Activated CD4-positive, alpha-beta memory T cell treated with anti-CD3 and anti-CD28 coated beads for 36 hours (primary cell): ENCODE measurements at regions of chr7 and their contacts with region 1.

Region 1: DNA sequence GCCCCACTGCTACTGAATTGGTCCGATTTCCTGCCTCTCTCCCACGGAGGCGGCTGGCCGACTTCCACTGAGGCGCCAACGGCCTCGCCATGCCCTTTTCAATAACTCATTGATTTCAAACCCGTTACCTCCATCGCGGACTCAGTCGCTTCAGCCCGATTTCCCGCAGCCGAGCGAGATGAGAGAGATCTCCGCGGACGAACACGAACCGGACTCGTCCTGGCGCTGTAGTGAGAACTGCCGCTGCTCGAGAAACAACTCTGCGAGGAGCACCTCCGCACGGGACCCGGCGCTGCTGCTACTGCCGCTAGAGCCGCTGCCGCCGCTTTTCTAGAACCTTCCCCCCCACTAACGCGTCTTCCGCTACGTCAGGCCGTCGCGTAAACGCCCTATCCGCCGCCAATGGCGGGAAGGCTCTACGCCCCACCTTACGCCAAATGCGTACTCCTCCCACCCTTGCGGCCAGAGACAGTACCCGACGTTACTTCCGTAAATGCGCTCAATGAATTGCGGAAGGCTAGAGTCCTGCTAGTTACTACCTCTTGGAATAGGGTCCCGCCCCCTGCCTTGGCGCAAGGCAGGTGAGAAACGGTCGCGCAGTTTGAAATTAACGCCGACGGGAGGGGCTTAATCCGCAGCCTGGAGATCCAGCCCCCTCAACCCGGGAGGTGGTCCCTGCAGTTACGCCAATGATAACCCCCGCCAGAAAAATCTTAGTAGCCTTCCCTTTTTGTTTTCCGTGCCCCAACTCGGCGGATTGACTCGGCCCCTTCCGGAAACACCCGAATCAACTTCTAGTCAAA is at the start of gene HNRNPA2B1:
- DNase-seq: peak; percentile 98
- H3K4me3 Mint-ChIP-seq: peak within 1 kb of the TSS; percentile 99
- H3K27ac Mint-ChIP-seq: peak within 1 kb of the TSS; percentile 100
- H3K4me1 Mint-ChIP-seq: peaks cover 39% of the 10 kb centered on the region
- H3K27me3 Mint-ChIP-seq: peaks cover 6% of the 10 kb centered on the region
- total RNA-seq, gene HNRNPA2B1: 906 to 929 TPM

Region 2: DNA sequence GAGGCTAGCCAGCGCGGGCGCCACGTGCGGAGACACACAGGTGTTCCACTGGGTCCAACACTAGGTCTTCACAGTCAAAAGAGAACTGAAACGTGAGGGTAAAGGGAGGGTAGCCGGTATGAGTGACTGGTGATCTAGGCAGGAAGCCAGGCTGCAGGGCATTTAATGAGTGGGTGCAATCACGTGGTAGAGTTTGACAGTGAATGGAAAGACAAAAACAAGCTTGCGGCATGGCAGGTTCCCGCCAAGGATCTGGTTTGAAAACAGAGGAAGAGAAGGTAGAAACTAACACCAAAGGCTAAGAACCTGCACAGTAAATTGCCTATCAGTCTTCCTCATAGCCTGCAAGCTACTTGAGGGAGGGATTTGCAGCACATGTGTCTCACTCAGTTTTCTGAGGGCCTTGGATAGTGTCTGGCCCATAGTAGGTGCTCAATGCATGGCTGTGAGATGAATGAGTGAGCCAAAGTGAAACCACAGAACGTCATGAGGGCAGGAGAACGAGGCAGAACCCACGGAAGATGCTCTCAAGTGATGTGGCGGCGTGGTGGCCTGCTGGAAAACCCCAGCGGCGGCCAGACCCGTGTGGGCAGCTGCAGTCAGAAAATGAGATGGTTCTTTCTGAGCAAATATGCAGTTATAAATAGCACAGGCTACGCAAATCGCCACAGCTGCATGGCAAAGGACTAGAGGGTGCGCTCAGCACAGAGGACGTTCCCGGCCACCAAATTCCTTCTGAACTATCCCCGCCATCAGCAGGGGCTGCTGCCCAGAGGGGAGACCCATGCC is 232.2 kb before region 1 on chr7:
- CTCF ChIA-PET with region 1: interaction called, 3 read pairs
- POLR2A ChIA-PET with region 1: interaction called, 5 read pairs
- intact Hi-C with region 1: loop called (anchors 2 kb)
- DNase-seq: peak; percentile 87
- H3K4me3 Mint-ChIP-seq: peak overlapping the region; percentile 7
- H3K27ac Mint-ChIP-seq: peak overlapping the region; percentile 55
- H3K4me1 Mint-ChIP-seq: peaks cover 23% of the 10 kb centered on the region
- H3K27me3 Mint-ChIP-seq: peaks cover 31% of the 10 kb centered on the region

Region 3: GRCh38 chr7:26187380-26188205 is 13.1 kb before region 1 on chr7:
- CTCF ChIA-PET with region 1: interaction called, 13 read pairs
- POLR2A ChIA-PET with region 1: interaction called, 142 read pairs
- intact Hi-C with region 1: loop called (anchors 1 kb)
- DNase-seq: no peak
- H3K4me3 Mint-ChIP-seq: peak overlapping the region; percentile 10
- H3K27ac Mint-ChIP-seq: peak overlapping the region; percentile 81
- H3K4me1 Mint-ChIP-seq: peaks cover 70% of the 10 kb centered on the region
- H3K27me3 Mint-ChIP-seq: no peaks in the 10 kb centered on the region

Region 4: DNA sequence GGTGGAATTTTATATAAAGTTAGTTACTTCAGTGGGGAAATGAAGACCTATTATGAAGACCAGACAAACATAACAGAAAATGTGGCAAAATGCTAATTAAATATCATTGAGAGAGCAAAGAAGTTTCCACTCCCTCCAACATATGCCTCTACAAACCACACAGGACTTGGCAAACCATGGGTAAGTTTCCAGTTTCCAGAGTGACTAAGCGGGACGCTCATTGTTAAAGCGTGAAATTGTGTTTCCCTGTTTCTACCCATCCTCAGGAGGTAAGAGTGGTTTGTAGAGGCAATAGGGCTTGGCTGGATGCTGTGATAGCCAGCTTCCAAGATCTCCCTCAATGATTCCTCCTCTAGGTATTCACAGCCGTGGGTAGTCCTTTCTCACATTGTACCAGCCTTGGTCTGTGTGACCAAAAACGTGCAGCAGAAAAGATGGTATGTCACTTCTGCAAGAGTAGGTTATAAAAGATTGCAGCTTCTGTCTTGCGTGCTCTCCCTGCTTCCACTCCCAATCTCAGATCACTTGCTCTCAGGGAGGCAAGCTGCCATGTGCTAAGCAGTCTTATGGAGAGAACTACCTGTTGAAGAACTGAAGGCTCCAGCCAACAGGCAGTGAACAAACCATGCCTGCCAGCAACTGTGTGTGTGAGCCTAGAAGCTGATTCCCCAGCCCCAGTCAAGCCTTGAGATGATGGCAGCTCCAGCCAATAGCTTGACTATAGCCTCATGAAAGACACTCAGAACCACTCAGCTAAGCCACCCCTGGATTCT is 36.6 kb after region 1 on chr7:
- CTCF ChIA-PET with region 1: no interaction called
- POLR2A ChIA-PET with region 1: no interaction called
- intact Hi-C with region 1: no loop called
- DNase-seq: no peak
- H3K4me3 Mint-ChIP-seq: no peak overlapping the region
- H3K27ac Mint-ChIP-seq: no peak overlapping the region
- H3K4me1 Mint-ChIP-seq: no peaks in the 10 kb centered on the region
- H3K27me3 Mint-ChIP-seq: no peaks in the 10 kb centered on the region

Region 5: GRCh38 chr7:26250239-26250638 is 49.6 kb after region 1 on chr7:
- CTCF ChIA-PET with region 1: no interaction called
- POLR2A ChIA-PET with region 1: no interaction called
- intact Hi-C with region 1: no loop called
- DNase-seq: no peak
- H3K4me3 Mint-ChIP-seq: no peak overlapping the region
- H3K27ac Mint-ChIP-seq: no peak overlapping the region
- H3K4me1 Mint-ChIP-seq: no peaks in the 10 kb centered on the region
- H3K27me3 Mint-ChIP-seq: no peaks in the 10 kb centered on the region

Region 6: GRCh38 chr7:26291699-26292538 is 91.3 kb after region 1 on chr7 and contains the start of gene SNX10:
- CTCF ChIA-PET with region 1: interaction called, 8 read pairs
- POLR2A ChIA-PET with region 1: interaction called, 42 read pairs
- intact Hi-C with region 1: loop called (anchors 1 kb)
- DNase-seq: peak; percentile 76
- H3K4me3 Mint-ChIP-seq: peak within 1 kb of the TSS; percentile 93
- H3K27ac Mint-ChIP-seq: peak within 1 kb of the TSS; percentile 90
- H3K4me1 Mint-ChIP-seq: peaks cover 28% of the 10 kb centered on the region
- H3K27me3 Mint-ChIP-seq: no peaks in the 10 kb centered on the region
- total RNA-seq, gene SNX10: 43.1 to 44.1 TPM

Region 7: GRCh38 chr7:26667500-26668133 is 467.0 kb after region 1 on chr7:
- CTCF ChIA-PET with region 1: no interaction called
- POLR2A ChIA-PET with region 1: no interaction called
- intact Hi-C with region 1: loop called (anchors 10 kb)
- DNase-seq: peak; percentile 61
- H3K4me3 Mint-ChIP-seq: no peak overlapping the region
- H3K27ac Mint-ChIP-seq: no peak overlapping the region
- H3K4me1 Mint-ChIP-seq: peaks cover 19% of the 10 kb centered on the region
- H3K27me3 Mint-ChIP-seq: no peaks in the 10 kb centered on the region